Mammary epithelial cell (primary cell): ENCODE measurements at regions of chr2 and their contacts with region 1.

Region 1: DNA sequence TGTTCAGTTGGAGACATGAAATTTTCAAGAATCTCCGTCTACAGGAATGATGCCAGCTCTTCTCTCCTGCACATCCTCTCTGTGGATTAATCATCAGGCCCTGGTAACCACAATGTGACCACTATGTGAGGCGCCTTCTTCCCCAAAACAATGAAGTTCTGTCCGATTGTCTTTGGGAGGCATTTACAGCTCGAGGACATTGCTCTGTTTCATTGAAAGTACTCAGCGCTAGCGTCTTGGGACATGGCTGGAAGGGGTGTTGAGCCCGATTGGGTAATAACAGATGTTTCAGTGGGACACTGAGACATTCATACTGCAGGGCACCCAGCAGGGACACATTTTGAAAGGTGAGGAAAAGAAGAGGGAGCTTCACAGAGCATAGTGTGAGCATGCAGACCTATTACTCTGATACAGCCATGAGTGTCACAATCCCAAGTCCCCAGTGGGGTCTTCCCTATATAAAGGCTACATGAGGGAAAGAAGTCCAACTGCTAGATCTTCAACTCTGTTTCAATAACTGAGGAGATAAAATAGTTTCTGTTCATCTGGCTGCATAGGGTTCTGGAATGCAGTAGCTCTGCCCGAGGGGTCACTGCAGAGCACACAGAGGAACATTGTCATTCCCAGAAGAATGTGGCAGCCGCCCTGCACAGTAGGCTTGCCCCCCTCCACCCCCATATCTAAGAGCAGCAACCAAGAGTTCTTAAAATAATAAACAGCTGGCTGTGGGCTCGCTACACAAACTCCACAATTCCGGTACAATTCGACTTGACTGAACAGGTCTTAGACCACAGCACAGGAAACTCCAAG is 237.3 kb downstream of the OSR1 start:
- DNase-seq: peak; percentile 98
- H3K4me3 ChIP-seq: no peak overlapping the region
- H3K27ac ChIP-seq: peak overlapping the region; percentile 91
- H3K4me1 ChIP-seq: peaks cover 66% of the 10 kb centered on the region
- H3K27me3 ChIP-seq: no peaks in the 10 kb centered on the region
- CTCF ChIP-seq: peak in 1 of 2 donors; percentile 3

Region 2: GRCh38 chr2:18749912-18750526 is 371.1 kb before region 1 on chr2:
- CTCF ChIA-PET with region 1: no interaction called
- dilution Hi-C with region 1: no loop called
- in situ Hi-C with region 1: no loop called
- intact Hi-C with region 1: loop called (anchors 5 kb)
- DNase-seq: peak; percentile 35
- H3K4me3 ChIP-seq: no peak overlapping the region
- H3K27ac ChIP-seq: no peak overlapping the region
- H3K4me1 ChIP-seq: peaks cover 9% of the 10 kb centered on the region
- H3K27me3 ChIP-seq: no peaks in the 10 kb centered on the region
- CTCF ChIP-seq: peak; percentile 73 to 81

Region 3: GRCh38 chr2:18987592-18988073 is 133.5 kb before region 1 on chr2:
- CTCF ChIA-PET with region 1: no interaction called
- dilution Hi-C with region 1: no loop called
- in situ Hi-C with region 1: no loop called
- intact Hi-C with region 1: loop called (anchors 5 kb)
- DNase-seq: peak; percentile 86
- H3K4me3 ChIP-seq: no peak overlapping the region
- H3K27ac ChIP-seq: no peak overlapping the region
- H3K4me1 ChIP-seq: peaks cover 28% of the 10 kb centered on the region
- H3K27me3 ChIP-seq: no peaks in the 10 kb centered on the region
- CTCF ChIP-seq: peak; percentile 24 to 32

Region 4: GRCh38 chr2:19073522-19073921 is 47.6 kb before region 1 on chr2:
- CTCF ChIA-PET with region 1: interaction called, 4 read pairs
- dilution Hi-C with region 1: no loop called
- in situ Hi-C with region 1: no loop called
- intact Hi-C with region 1: loop called (anchors 5 kb)
- DNase-seq: peak; percentile 98
- H3K4me3 ChIP-seq: no peak overlapping the region
- H3K27ac ChIP-seq: peak overlapping the region; percentile 83
- H3K4me1 ChIP-seq: peaks cover 21% of the 10 kb centered on the region
- H3K27me3 ChIP-seq: no peaks in the 10 kb centered on the region
- CTCF ChIP-seq: no peak

Region 5: GRCh38 chr2:19228715-19229114 is 107.6 kb after region 1 on chr2:
- CTCF ChIA-PET with region 1: no interaction called
- dilution Hi-C with region 1: loop called (anchors 5 kb)
- in situ Hi-C with region 1: no loop called
- intact Hi-C with region 1: loop called (anchors 5 kb)
- DNase-seq: peak; percentile 91
- H3K4me3 ChIP-seq: peak overlapping the region in 1 of 3 experiments; percentile 13
- H3K27ac ChIP-seq: peak overlapping the region; percentile 26
- H3K4me1 ChIP-seq: peaks cover 36% of the 10 kb centered on the region
- H3K27me3 ChIP-seq: no peaks in the 10 kb centered on the region
- CTCF ChIP-seq: no peak

Region 6: GRCh38 chr2:19362755-19363473 is 241.8 kb after region 1 on chr2:
- CTCF ChIA-PET with region 1: no interaction called
- dilution Hi-C with region 1: no loop called
- in situ Hi-C with region 1: no loop called
- intact Hi-C with region 1: loop called (anchors 5 kb)
- DNase-seq: peak; percentile 83
- H3K4me3 ChIP-seq: peak overlapping the region; percentile 53 to 67 (median 65)
- H3K27ac ChIP-seq: peak overlapping the region; percentile 45
- H3K4me1 ChIP-seq: peaks cover 24% of the 10 kb centered on the region
- H3K27me3 ChIP-seq: no peaks in the 10 kb centered on the region
- CTCF ChIP-seq: peak; percentile 67 to 79